ENCODE measurements at regions of chr1 and their contacts with region 1.

Region 1: DNA sequence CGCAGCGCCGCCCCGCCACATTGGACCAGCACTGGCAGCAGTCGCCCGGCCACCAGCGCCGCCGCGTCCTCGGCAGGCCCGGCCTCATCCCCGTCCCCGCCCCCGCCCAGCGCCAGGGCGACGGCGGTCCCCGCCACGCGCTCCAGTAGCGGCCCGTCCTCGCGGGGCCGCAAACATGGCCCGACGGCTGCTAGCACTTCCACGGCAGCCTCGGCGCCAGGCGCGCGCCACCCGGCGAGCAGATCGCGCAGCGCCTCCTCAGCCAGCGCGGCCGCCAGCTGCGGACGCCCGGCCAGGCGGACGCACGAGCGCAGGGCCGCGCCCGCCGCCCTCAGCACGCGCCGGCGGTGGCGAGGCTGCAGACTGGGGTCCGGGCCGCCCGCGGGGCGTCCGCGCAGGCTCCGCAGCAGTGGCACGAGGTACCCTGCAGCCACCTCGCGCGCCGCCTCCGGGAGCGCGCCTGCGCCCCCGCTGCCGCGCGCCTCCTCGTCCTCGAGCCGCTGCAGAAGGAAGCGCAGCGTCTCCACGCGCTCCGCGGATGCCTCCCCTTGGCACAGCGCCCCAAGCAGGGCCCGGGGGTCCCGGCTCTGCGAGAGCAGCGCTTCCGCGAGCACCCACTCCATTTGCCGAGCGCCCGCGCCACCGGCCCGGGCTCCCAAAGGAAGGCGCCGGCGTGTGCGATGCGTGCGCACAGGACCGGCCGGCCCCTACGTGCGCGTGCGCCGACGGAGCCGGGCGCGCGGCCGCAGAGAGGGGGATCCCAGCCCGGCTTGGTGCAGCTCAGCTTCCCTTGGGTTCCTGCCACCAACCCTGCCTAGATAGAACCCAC is at the start of gene TARBP1:
- DNase-seq: peak; percentile 86
- total RNA-seq, gene TARBP1: 9.1 TPM

Region 2: DNA sequence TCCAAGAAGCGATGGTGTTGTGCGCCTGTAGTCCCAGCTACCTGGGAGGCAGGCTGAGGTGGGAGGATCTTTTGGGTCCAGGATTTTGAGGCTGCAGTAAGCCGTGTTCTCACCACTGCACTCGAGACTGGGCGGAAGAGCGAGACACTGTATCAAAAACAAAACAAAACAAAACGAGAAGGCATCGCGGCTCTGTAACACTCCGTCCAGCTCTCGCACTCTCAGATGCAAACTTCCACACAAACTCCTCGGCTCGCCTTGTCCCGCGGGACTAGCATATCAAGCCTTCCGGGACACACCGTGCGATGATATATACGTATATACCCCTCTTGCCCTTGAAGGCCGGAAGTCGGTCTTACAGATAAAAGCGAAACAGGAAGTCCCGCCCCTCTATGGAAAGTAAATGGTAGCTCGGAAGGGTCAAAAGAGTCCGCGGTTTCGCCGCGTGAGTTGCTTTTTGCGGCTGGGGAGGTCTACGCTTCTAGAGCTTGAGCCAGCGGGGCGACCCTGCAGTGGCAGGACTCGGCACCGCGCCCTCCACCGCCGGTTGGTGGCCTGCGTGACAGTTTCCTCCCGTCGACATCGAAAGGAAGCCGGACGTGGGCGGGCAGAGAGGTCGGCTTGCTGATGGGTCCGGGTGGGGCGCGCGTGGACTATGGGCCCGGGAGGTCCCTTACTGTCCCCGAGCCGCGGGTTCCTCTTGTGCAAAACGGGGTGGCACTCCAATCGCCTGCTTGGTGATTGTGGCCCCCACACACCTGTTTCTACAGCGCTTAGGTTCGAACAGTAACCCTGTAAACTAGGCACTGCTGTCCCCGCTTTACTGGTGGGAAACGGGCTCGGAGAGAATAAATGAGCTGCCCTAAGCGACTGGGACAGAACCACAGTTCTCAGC is 105.4 kb before region 1 on chr1 and contains the start of gene COA6:
- intact Hi-C with region 1: loop called (anchors 5 kb)
- DNase-seq: peak; percentile 93
- total RNA-seq, gene COA6: 30.0 TPM

Region 3: DNA sequence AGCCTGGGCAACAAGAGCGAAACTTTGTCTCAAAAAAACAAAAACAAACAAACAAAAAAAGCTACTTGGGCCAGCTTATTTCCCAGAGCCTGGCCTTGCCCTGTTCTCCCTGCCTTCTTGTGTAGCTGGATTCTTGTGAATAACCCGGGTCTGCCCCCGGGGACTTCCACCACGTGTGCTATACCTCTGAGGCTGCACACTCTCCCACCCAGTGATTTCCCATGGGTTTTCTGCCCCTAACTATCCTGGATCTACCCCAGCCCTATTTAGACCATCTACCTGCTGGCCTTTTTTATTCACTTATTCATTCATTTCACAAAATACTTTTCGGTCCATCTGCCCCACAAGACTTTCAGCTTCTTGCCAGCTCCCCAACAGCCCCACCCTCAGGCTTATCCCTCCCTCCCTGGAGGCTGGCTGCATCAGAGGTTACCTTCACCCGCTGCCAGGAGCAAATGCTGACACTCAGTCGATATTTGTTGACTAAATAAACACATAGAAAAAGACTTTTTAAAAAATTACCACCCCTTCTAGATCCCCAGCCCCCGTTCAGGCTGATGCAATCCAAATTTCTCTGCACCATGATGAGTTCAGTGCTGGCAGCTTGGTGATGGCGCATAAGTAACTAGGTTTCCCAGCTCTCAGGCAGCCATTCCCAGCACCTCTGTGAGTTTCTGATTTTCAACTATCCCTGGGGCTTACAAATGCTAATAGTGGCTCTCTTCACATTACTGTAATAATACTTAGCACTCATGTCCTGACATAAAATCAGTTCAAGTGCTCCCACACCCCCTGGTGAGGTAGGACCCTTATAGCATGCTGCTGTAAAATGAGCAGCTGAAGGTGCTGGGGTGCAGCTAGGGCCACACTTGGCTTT is 31.0 kb after region 1 on chr1:
- intact Hi-C with region 1: no loop called
- DNase-seq: no peak